ENCODE measurements at regions of chr11 and their contacts with region 1.

Region 1: GRCh38 chr11:130314750-130315285 is at the start of gene ZBTB44:
- DNase-seq: peak; percentile 89 to 94 (median 92)
- H3K4me3 ChIP-seq: peak within 1 kb of the TSS; percentile 67 to 80 (median 80)
- H3K4me3 Mint-ChIP-seq: peak within 1 kb of the TSS; percentile 92 to 95
- H3K27ac ChIP-seq: peak within 1 kb of the TSS; percentile 55 to 82
- H3K27ac Mint-ChIP-seq: peak within 1 kb of the TSS; percentile 84 to 94 (median 90)
- H3K4me1 ChIP-seq: peaks cover 13 to 42% of the 10 kb centered on the region in 2 donors
- H3K4me1 Mint-ChIP-seq: peaks cover 40% of the 10 kb centered on the region
- H3K27me3 ChIP-seq: no peaks in the 10 kb centered on the region
- H3K27me3 Mint-ChIP-seq: peaks cover 5 to 8% (median 7%) of the 10 kb centered on the region in 3 donors
- CTCF ChIP-seq: no peak
- polyA plus RNA-seq, gene ZBTB44: 2.4 to 21.3 (median 2.7) TPM

Region 2: DNA sequence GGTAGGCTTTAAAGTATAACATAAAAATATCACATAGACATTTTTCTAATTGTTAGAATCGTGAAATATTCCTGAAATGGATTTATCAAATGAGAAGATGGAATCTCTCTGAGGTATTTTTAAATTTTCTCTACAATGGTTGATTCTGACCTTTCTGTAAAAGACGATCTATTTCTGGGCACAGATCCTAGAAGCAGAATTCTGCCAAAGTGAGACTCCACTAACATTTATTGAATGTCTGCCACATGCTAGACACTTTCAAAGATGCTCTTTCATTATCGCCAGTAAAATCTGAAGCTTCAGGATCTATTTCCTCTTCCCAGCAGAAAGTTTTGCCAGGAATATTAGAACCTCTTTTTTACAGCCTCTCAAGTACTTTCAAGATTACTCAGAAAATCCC is 563.3 kb before region 1 on chr11:
- intact Hi-C with region 1: no loop called
- DNase-seq: no peak
- H3K4me3 ChIP-seq: no peak overlapping the region
- H3K4me3 Mint-ChIP-seq: no peak overlapping the region
- H3K27ac ChIP-seq: no peak overlapping the region
- H3K27ac Mint-ChIP-seq: no peak overlapping the region
- H3K4me1 ChIP-seq: peaks cover 7 to 8% of the 10 kb centered on the region in 2 donors
- H3K4me1 Mint-ChIP-seq: peaks cover 6% of the 10 kb centered on the region
- H3K27me3 ChIP-seq: peaks cover 16 to 30% of the 10 kb centered on the region in 2 donors
- H3K27me3 Mint-ChIP-seq: peaks cover 21 to 48% (median 31%) of the 10 kb centered on the region in 3 donors
- CTCF ChIP-seq: no peak

Region 3: GRCh38 chr11:129950101-129951091 is 364.4 kb before region 1 on chr11:
- intact Hi-C with region 1: no loop called
- DNase-seq: peak; percentile 74 to 83 (median 74)
- H3K4me3 ChIP-seq: peak overlapping the region in 1 of 3 experiments; percentile 50
- H3K4me3 Mint-ChIP-seq: peak overlapping the region; percentile 65 to 74
- H3K27ac ChIP-seq: peak overlapping the region; percentile 79 to 84
- H3K27ac Mint-ChIP-seq: peak overlapping the region; percentile 77 to 94 (median 93)
- H3K4me1 ChIP-seq: peaks cover 47 to 54% of the 10 kb centered on the region in 2 donors
- H3K4me1 Mint-ChIP-seq: peaks cover 58% of the 10 kb centered on the region
- H3K27me3 ChIP-seq: no peaks in the 10 kb centered on the region
- H3K27me3 Mint-ChIP-seq: no peaks in the 10 kb centered on the region
- CTCF ChIP-seq: no peak

Region 4: GRCh38 chr11:130002846-130003716 is 311.7 kb before region 1 on chr11:
- intact Hi-C with region 1: no loop called
- DNase-seq: peak; percentile 95 to 98 (median 98)
- H3K4me3 ChIP-seq: peak overlapping the region; percentile 52 to 86 (median 75)
- H3K4me3 Mint-ChIP-seq: peak overlapping the region; percentile 89 to 98
- H3K27ac ChIP-seq: peak overlapping the region; percentile 99 to 100
- H3K27ac Mint-ChIP-seq: peak overlapping the region; percentile 99 to 100 (median 100)
- H3K4me1 ChIP-seq: peaks cover 32 to 39% of the 10 kb centered on the region in 2 donors
- H3K4me1 Mint-ChIP-seq: peaks cover 43% of the 10 kb centered on the region
- H3K27me3 ChIP-seq: no peaks in the 10 kb centered on the region
- H3K27me3 Mint-ChIP-seq: no peaks in the 10 kb centered on the region
- CTCF ChIP-seq: no peak

Region 5: DNA sequence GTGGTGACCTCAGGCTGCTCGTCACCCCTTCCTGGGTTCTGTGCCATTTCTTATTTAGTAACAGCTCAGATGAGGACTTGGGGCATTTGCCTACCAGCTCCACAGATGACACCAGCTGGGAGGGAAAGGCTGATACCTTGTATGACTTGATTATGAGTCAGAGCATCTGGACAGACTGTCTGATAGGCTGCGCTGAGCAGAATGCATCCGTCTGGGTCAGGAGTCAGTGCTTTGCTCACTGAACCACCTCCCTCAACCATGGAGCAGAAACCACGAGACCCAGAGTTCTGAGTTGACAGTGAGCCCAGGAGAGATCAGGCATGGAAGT is 148.4 kb before region 1 on chr11:
- intact Hi-C with region 1: loop called in 1 of 2 experiments (anchors 10 kb)
- DNase-seq: peak; percentile 54 to 67 (median 65)
- H3K4me3 ChIP-seq: no peak overlapping the region
- H3K4me3 Mint-ChIP-seq: no peak overlapping the region
- H3K27ac ChIP-seq: peak overlapping the region in 1 of 2 donors; percentile 69
- H3K27ac Mint-ChIP-seq: peak overlapping the region; percentile 74 to 94 (median 88)
- H3K4me1 ChIP-seq: peaks cover 60 to 62% of the 10 kb centered on the region in 2 donors
- H3K4me1 Mint-ChIP-seq: peaks cover 71% of the 10 kb centered on the region
- H3K27me3 ChIP-seq: no peaks in the 10 kb centered on the region
- H3K27me3 Mint-ChIP-seq: peaks cover 0 to 5% (median 3%) of the 10 kb centered on the region in 3 donors
- CTCF ChIP-seq: no peak

Region 6: DNA sequence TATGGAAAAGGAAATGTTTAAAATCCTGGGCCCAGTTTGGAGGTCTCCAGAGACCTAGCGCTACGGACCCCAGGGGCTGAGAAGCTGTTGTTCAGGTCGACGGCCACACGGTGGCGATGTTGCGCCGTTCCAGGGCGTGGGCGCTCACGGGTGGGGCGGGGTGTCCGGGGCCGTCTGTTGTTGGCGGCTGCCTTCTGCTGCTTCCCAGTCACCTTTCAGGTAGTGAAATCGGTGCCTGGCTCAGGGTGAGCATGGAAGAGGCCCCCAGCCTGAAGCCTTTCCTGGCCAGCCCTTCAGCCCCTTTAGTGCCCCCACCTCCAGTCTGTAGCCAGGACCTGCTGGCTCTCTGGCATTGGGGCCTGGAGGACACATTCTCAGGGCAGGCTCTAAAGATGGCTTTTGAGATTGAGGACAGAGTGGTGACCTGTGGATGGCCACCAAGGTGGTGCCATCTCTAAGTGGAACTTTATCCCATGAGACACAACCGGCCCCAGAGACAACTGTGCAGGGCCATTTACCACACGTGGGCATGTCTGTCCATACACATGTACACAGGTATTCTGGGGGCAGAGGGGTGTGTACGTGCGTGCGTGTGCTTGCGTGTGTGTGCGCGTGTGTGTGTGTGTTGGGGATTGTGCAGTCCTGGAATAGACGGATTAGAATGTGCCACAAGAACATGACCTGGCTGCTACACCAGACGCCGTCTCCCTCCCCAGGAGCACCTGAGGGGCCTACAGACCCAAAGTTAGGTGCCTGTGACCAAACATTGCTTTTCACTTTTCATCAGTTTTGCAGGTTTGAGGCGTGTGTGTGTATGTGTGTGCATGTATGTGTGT is 101.5 kb before region 1 on chr11:
- intact Hi-C with region 1: no loop called
- DNase-seq: peak; percentile 32 to 52 (median 51)
- H3K4me3 ChIP-seq: peak overlapping the region in 1 of 3 experiments; percentile 30
- H3K4me3 Mint-ChIP-seq: peak overlapping the region in 1 of 2 donors; percentile 53
- H3K27ac ChIP-seq: no peak overlapping the region
- H3K27ac Mint-ChIP-seq: no peak overlapping the region
- H3K4me1 ChIP-seq: peaks cover 3 to 6% of the 10 kb centered on the region in 2 donors
- H3K4me1 Mint-ChIP-seq: peaks cover 2% of the 10 kb centered on the region
- H3K27me3 ChIP-seq: no peaks in the 10 kb centered on the region
- H3K27me3 Mint-ChIP-seq: peaks cover 1 to 5% (median 3%) of the 10 kb centered on the region in 3 donors
- CTCF ChIP-seq: peak; percentile 99

Region 7: GRCh38 chr11:130916238-130916855 is 601.5 kb after region 1 on chr11 and contains the start of gene SNX19:
- intact Hi-C with region 1: loop called in 1 of 2 experiments (anchors 5 kb)
- DNase-seq: peak; percentile 89 to 93 (median 91)
- H3K4me3 ChIP-seq: peak within 1 kb of the TSS; percentile 65 to 80 (median 66)
- H3K4me3 Mint-ChIP-seq: peak within 1 kb of the TSS; percentile 80 to 92
- H3K27ac ChIP-seq: peak within 1 kb of the TSS; percentile 64 to 93
- H3K27ac Mint-ChIP-seq: peak within 1 kb of the TSS; percentile 83 to 96 (median 88)
- H3K4me1 ChIP-seq: peaks cover 14 to 20% of the 10 kb centered on the region in 2 donors
- H3K4me1 Mint-ChIP-seq: peaks cover 29% of the 10 kb centered on the region
- H3K27me3 ChIP-seq: peaks cover 0 to 9% of the 10 kb centered on the region in 2 donors
- H3K27me3 Mint-ChIP-seq: peaks cover 11 to 18% (median 15%) of the 10 kb centered on the region in 3 donors
- CTCF ChIP-seq: peak; percentile 96
- polyA plus RNA-seq, gene SNX19: 13.6 to 23.3 (median 17.6) TPM